Dendritic cell treated with granulocyte-macrophage colony-stimulating factor and Interleukin-4, amounts not matched to agents 40 ng/mL and 50 ng/mL, for 4 days (primary cell): ENCODE measurements at regions of chr11 and their contacts with region 1.

Region 1: GRCh38 chr11:108302121-108302785 is 79.4 kb downstream of the ATM start:
- H3K4me3 Mint-ChIP-seq: no peak overlapping the region
- H3K27ac Mint-ChIP-seq: no peak overlapping the region
- H3K4me1 Mint-ChIP-seq: no peaks in the 10 kb centered on the region
- H3K27me3 Mint-ChIP-seq: no peaks in the 10 kb centered on the region

Region 2: DNA sequence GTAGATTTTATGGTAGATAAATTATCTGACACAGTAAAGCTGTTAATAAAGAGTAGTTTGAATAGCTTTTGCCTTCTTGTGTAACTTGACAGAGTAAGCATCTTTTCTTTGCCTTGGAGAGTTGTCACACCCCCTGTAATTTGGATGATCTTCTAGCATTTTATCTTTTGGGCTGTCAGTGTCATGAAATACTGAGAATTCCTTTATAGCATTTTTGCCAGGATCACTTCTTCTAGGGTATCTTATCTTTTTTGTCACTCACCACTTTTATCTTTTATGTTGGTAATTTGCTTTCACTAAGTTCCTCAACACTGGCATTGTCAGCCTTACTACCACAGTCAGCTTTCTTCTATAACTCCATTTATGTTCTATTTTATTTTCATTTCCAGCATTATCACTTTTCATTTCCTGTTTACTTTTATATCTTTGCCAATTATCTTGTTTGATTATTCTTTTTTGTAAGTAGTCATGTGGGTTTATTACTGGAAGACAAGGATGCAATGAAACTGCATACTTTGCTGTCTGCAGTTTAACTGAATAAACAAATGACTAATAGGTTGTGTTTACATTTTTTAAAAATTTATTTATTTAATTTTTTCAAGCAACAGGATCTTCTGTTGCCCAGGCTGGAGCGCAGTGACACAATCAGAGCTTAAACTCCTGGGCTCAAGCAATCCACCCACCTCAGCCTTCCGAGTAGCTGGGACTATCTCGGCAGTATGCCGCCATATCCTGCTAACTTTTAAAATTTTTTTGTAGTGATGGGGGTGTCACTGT is 208.9 kb before region 1 on chr11:
- intact Hi-C with region 1: loop called (anchors 10 kb)
- H3K4me3 Mint-ChIP-seq: no peak overlapping the region
- H3K27ac Mint-ChIP-seq: peak overlapping the region; percentile 30
- H3K4me1 Mint-ChIP-seq: peaks cover 14% of the 10 kb centered on the region
- H3K27me3 Mint-ChIP-seq: no peaks in the 10 kb centered on the region

Region 3: GRCh38 chr11:108170184-108170583 is 132.1 kb before region 1 on chr11:
- intact Hi-C with region 1: loop called (anchors 10 kb)
- H3K4me3 Mint-ChIP-seq: no peak overlapping the region
- H3K27ac Mint-ChIP-seq: no peak overlapping the region
- H3K4me1 Mint-ChIP-seq: no peaks in the 10 kb centered on the region
- H3K27me3 Mint-ChIP-seq: no peaks in the 10 kb centered on the region

Region 4: DNA sequence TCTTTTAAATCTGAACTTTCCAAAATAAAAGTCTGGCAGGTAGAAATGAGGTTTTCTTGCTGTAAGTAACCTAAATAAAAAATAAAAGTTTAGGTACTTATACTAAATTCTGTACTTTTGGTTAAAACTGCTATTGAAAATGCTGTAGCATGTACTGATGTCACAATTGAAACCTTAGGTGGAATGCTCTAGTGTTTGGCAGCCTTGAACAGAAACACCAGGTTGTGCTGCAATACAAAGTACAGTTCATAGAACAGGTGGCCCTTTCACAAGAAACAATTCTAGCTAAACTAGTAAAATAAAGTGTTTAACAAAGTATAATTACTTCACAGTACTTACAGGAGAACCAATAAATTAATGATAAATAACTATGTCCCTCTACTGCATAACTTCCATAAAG is 104.9 kb before region 1 on chr11:
- intact Hi-C with region 1: no loop called
- H3K4me3 Mint-ChIP-seq: no peak overlapping the region
- H3K27ac Mint-ChIP-seq: no peak overlapping the region
- H3K4me1 Mint-ChIP-seq: peaks cover 21% of the 10 kb centered on the region
- H3K27me3 Mint-ChIP-seq: no peaks in the 10 kb centered on the region

Region 5: GRCh38 chr11:108561535-108561991 is 259.3 kb after region 1 on chr11:
- intact Hi-C with region 1: no loop called
- H3K4me3 Mint-ChIP-seq: no peak overlapping the region
- H3K27ac Mint-ChIP-seq: no peak overlapping the region
- H3K4me1 Mint-ChIP-seq: peaks cover 7% of the 10 kb centered on the region
- H3K27me3 Mint-ChIP-seq: no peaks in the 10 kb centered on the region